ENCODE measurements at regions of chr20 and their contacts with region 1.

Region 1: DNA sequence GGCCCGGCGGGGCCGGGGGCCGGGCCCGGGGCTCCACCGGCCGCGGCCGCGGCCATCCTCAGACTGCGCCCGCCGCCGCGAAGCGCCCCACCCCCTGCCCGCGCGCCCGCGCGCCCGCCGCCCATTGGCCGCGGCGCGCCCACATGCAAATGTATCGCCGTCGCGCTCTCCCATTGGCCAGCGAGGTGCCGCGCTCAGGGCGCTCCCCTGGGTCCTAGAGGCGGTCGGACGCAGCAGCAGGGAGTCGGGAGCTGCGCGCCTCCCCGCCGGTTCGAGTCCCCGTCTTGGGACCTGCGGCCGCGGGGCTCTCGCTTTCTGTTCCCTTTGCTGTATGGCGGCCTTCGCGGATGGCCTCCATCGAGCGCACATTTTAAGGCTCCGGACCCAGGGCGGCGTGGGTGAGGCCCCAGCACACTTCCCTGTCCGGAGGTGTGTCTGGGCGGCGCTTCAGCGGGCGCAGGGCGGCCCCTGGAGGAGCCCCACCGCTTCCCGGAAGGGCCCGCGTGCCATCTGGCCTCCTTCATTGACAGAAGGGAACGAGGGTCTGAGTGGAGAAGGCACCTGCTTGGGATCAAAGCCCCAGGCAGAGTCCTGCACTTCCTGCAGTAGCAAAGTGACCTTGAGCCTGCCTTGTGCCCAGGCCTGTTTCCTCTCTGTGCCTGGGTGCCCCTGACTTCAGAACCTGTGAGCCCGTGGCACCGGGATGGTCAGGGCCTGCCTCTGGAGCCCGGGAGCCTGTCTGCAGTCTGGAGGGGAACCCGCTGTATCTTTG is at the start of gene CABLES2:
- DNase-seq: peak; percentile 96 to 97
- ATAC-seq: peak; percentile 94
- H3K4me3 ChIP-seq: peak within 1 kb of the TSS; percentile 63 to 84
- H3K27ac ChIP-seq: no peak within 1 kb of the TSS
- H3K4me1 ChIP-seq: no peaks in the 10 kb centered on the region
- H3K27me3 ChIP-seq: no peaks in the 10 kb centered on the region
- total RNA-seq, gene CABLES2: 3.0 to 4.2 TPM

Region 2: GRCh38 chr20:62161347-62162071 is 245.9 kb before region 1 on chr20:
- intact Hi-C with region 1: no loop called
- DNase-seq: no peak
- ATAC-seq: no peak
- H3K4me3 ChIP-seq: no peak overlapping the region
- H3K27ac ChIP-seq: no peak overlapping the region
- H3K4me1 ChIP-seq: no peaks in the 10 kb centered on the region
- H3K27me3 ChIP-seq: no peaks in the 10 kb centered on the region

Region 3: DNA sequence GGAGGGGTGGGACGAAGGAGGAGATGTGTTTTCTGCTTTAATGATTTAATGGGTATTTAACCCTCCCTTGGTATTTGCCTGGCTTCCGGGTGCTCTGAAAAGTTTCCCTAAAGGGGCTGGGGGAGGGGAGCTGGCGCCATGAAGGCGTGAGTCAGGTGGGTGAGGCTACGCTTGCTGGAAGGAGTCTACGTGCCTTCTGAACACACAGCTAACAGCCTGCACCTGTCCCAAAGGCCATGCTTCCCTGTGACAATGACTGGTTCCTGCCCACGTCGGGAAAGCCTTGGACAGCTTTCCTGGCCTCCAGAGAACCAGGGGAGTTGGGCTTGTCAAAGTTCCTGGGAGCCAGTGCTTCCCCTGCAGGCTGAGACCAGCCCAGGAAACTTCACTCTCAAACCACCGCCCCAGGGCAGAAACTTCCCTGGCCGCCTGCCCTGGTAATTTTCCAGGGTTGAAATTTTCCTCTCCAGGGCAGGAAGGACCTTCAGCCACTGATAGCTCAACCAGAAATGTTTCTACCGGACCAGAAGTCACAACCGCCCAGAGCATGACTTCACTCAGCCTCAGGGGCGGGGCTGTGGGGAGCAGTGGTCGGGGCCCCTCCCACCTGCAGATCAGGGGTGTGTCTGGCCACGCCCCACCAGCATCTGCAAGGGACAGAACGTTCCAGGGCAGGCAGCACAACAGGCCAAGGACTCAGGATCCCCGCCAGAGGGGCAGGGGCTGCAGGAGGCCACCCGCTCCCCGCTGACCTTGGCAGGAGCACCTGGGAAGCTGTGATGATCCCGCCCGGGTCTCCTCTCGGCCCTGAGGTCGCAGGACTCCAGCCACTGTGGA is 216.3 kb after region 1 on chr20:
- intact Hi-C with region 1: loop called in 1 of 2 experiments (anchors 10 kb)
- DNase-seq: peak; percentile 94 to 95
- ATAC-seq: peak; percentile 90
- H3K4me3 ChIP-seq: no peak overlapping the region
- H3K27ac ChIP-seq: peak overlapping the region in 1 of 2 donors; percentile 20
- H3K4me1 ChIP-seq: no peaks in the 10 kb centered on the region
- H3K27me3 ChIP-seq: no peaks in the 10 kb centered on the region

Measured in aorta (tissue), 5 donors.